Activated CD4-positive, alpha-beta T cell treated with anti-CD3 and anti-CD28 coated beads for 36 hours (primary cell): ENCODE measurements at regions of chrX and their contacts with region 1.

Region 1: GRCh38 chrX:87664381-87664780 is 146.8 kb downstream of the KLHL4 start:
- DNase-seq: no peak
- ATAC-seq: no peak
- H3K4me3 Mint-ChIP-seq: no peak overlapping the region
- H3K27ac Mint-ChIP-seq: no peak overlapping the region
- H3K4me1 Mint-ChIP-seq: no peaks in the 10 kb centered on the region
- H3K27me3 Mint-ChIP-seq: no peaks in the 10 kb centered on the region

Region 2: GRCh38 chrX:87338510-87338909 is 325.9 kb before region 1 on chrX:
- CTCF ChIA-PET with region 1: no interaction called
- POLR2A ChIA-PET with region 1: no interaction called
- intact Hi-C with region 1: loop called in 1 of 2 experiments (anchors 10 kb)
- DNase-seq: no peak
- ATAC-seq: no peak
- H3K4me3 Mint-ChIP-seq: no peak overlapping the region
- H3K27ac Mint-ChIP-seq: no peak overlapping the region
- H3K4me1 Mint-ChIP-seq: no peaks in the 10 kb centered on the region
- H3K27me3 Mint-ChIP-seq: no peaks in the 10 kb centered on the region